CD4-positive, alpha-beta T cell (primary cell): ENCODE measurements at regions of chr15 and their contacts with region 1.

Region 1: GRCh38 chr15:41465822-41466421 is 27.8 kb upstream of the ITPKA start:
- DNase-seq: peak in 5 of 14 experiments; percentile 6 to 67 (median 58)
- ATAC-seq: peak; percentile 67
- H3K4me3 ChIP-seq: no peak overlapping the region
- H3K4me3 Mint-ChIP-seq: no peak overlapping the region
- H3K27ac ChIP-seq: no peak overlapping the region
- H3K27ac Mint-ChIP-seq: no peak overlapping the region
- H3K4me1 ChIP-seq: no peaks in the 10 kb centered on the region
- H3K4me1 Mint-ChIP-seq: peaks cover 4% of the 10 kb centered on the region
- H3K27me3 ChIP-seq: no peaks in the 10 kb centered on the region
- H3K27me3 Mint-ChIP-seq: no peaks in the 10 kb centered on the region
- CTCF ChIP-seq: peak; percentile 77

Region 2: DNA sequence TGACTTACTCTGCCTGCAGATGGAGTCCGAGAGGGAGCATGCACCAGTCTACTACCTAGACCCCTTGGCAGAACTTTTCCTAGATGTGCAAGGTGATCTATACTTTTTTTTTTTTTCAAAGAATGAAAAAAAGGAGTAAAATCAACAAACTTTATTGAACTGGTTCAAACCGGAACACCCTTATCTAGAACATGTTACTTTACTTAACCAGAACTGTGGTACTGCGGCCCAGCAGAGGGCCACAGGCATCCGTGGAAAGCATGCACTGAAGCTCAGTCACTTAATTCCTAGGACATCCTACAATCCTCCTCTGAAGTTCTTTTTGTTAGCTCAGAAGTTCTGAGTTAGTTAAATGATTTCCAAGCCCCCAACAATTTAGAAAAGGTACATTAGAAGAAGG is 491.0 kb before region 1 on chr15:
- CTCF ChIA-PET with region 1: no interaction called
- POLR2A ChIA-PET with region 1: no interaction called
- intact Hi-C with region 1: no loop called
- DNase-seq: no peak
- ATAC-seq: no peak
- H3K4me3 ChIP-seq: no peak overlapping the region
- H3K4me3 Mint-ChIP-seq: no peak overlapping the region
- H3K27ac ChIP-seq: no peak overlapping the region
- H3K27ac Mint-ChIP-seq: no peak overlapping the region
- H3K4me1 ChIP-seq: no peaks in the 10 kb centered on the region
- H3K4me1 Mint-ChIP-seq: no peaks in the 10 kb centered on the region
- H3K27me3 ChIP-seq: no peaks in the 10 kb centered on the region
- H3K27me3 Mint-ChIP-seq: no peaks in the 10 kb centered on the region
- CTCF ChIP-seq: no peak

Region 3: GRCh38 chr15:41506796-41507341 is 40.9 kb after region 1 on chr15:
- CTCF ChIA-PET with region 1: interaction called, 17 read pairs
- POLR2A ChIA-PET with region 1: no interaction called
- intact Hi-C with region 1: loop called in 1 of 2 experiments (anchors 5 kb)
- DNase-seq: peak in 2 of 14 experiments; percentile 24 to 49
- ATAC-seq: no peak
- H3K4me3 ChIP-seq: no peak overlapping the region
- H3K4me3 Mint-ChIP-seq: no peak overlapping the region
- H3K27ac ChIP-seq: no peak overlapping the region
- H3K27ac Mint-ChIP-seq: no peak overlapping the region
- H3K4me1 ChIP-seq: peaks cover 23% of the 10 kb centered on the region
- H3K4me1 Mint-ChIP-seq: peaks cover 8% of the 10 kb centered on the region
- H3K27me3 ChIP-seq: peaks cover 12 to 18% of the 10 kb centered on the region in 2 experiments
- H3K27me3 Mint-ChIP-seq: peaks cover 35% of the 10 kb centered on the region
- CTCF ChIP-seq: no peak

Region 4: DNA sequence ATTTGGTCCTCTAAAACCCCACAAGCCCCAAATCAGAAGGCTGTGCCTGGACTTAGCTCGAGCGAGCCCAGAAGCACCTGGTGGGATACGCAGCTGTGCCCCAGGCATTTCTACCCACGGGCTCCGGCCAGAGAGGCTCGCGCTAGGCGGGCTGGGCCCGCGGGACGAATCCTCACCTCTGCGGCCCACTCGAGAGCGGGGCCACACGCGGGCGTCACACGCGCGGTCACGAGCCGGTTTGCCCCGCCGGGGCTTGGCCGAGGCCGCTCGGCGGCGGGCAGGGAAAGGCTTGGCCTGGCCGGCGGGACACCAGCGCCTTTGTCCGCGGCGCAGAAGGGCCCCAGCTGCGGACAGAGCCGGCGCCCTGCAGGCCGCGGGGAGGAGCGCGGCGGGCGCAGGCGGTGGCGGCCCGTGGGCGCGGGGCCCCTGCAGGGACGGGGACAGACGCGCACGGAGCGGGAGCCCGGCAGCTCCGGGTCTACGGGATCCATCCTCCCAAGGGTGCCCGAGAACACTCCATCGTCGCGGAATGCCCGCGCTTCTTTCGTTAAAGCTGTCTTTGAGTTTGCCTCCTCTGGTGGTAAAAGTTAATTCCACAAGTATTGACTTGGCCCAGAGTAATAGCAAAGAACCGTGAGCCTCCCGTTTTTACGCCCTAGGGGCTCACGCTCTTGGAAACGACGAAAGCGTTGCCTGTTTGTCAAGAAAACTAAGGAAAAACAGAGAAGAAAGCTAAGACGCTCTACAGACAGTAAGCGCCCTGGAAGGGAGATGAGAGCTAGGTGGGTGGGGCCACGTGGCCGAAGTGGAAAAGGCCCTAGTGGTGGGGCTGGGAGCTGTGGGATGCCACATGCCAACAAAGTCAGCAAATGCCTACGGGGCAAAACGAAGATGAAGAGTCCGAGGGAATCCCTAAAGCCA is 119.5 kb after region 1 on chr15:
- CTCF ChIA-PET with region 1: interaction called, 6 read pairs
- POLR2A ChIA-PET with region 1: interaction called, 4 read pairs
- intact Hi-C with region 1: loop called (anchors 5 to 10 kb)
- DNase-seq: peak in 8 of 14 experiments; percentile 3 to 52 (median 20)
- ATAC-seq: peak; percentile 73
- H3K4me3 ChIP-seq: peak overlapping the region; percentile 34
- H3K4me3 Mint-ChIP-seq: peak overlapping the region; percentile 76
- H3K27ac ChIP-seq: no peak overlapping the region
- H3K27ac Mint-ChIP-seq: no peak overlapping the region
- H3K4me1 ChIP-seq: peaks cover 9% of the 10 kb centered on the region
- H3K4me1 Mint-ChIP-seq: peaks cover 10% of the 10 kb centered on the region
- H3K27me3 ChIP-seq: peaks cover 14 to 22% of the 10 kb centered on the region in 2 experiments
- H3K27me3 Mint-ChIP-seq: peaks cover 56% of the 10 kb centered on the region
- CTCF ChIP-seq: no peak

Region 5: DNA sequence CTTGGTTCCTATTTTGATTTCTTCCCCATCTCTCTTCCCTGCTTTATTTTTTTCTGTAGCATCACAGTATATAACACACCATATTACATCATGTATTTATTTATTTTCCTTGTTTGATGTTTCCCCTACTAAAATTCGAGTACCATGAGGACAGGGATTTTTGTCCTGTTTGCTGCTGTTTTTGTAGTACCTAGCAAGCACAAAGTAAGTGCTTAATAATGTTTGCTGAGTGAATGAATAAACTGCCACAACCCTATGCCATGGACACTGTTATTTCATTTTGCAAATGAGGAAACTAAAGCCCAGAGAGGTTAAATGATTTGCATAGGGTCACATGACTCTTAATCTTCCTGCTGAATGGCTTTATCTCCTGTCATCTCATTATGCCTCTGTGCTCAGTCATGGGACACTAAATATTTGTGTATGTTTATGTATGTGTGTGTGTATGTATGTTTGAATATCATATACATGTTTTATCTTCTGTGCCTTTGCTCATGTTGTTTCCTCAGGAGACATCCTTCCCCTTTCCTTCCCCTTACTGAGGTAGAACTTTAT is 168.2 kb after region 1 on chr15:
- CTCF ChIA-PET with region 1: no interaction called
- POLR2A ChIA-PET with region 1: no interaction called
- intact Hi-C with region 1: no loop called
- DNase-seq: peak in 2 of 14 experiments; percentile 11 to 12
- ATAC-seq: no peak
- H3K4me3 ChIP-seq: no peak overlapping the region
- H3K4me3 Mint-ChIP-seq: no peak overlapping the region
- H3K27ac ChIP-seq: no peak overlapping the region
- H3K27ac Mint-ChIP-seq: no peak overlapping the region
- H3K4me1 ChIP-seq: no peaks in the 10 kb centered on the region
- H3K4me1 Mint-ChIP-seq: peaks cover 5% of the 10 kb centered on the region
- H3K27me3 ChIP-seq: no peaks in the 10 kb centered on the region
- H3K27me3 Mint-ChIP-seq: no peaks in the 10 kb centered on the region
- CTCF ChIP-seq: no peak

Region 6: DNA sequence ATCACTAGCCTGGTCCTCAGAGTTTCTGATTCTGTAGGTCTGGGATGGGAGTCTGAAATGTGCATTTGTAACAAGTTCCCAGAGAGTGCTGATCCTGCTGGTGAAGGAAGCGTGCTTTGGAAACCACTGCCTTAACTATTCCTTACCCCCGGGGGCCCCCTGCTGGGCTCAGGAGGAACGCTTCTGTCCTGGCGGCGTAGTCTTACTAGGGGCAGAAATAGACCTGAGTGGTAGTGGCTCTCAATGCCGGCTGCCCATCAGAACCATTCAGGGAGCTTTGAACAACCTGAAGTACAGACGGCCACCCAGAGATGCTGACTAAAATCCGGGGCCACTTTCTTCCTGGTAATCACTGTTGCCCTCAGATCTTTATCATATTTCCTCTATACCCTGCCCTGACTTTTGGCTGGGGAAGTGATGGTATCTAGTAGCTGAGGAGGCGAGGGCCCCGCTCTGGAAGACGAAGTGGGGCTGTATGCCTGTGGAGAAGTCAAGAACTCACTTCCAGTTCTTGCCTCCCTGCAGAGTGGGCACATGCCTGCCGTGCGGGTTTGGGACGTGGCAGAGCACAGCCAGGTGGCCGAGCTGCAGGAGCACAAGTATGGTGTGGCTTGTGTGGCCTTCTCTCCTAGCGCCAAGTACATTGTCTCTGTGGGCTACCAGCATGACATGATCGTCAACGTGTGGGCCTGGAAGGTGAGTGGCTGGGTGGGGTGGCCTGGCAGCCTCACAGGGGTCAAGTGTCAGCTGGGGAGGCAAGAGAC is 345.7 kb after region 1 on chr15:
- CTCF ChIA-PET with region 1: interaction called, 4 read pairs
- POLR2A ChIA-PET with region 1: no interaction called
- intact Hi-C with region 1: loop called in 1 of 2 experiments (anchors 5 kb)
- DNase-seq: peak; percentile 62 to 88 (median 70)
- ATAC-seq: peak; percentile 97
- H3K4me3 ChIP-seq: no peak overlapping the region
- H3K4me3 Mint-ChIP-seq: no peak overlapping the region
- H3K27ac ChIP-seq: no peak overlapping the region
- H3K27ac Mint-ChIP-seq: peak overlapping the region; percentile 43
- H3K4me1 ChIP-seq: peaks cover 19% of the 10 kb centered on the region
- H3K4me1 Mint-ChIP-seq: peaks cover 12% of the 10 kb centered on the region
- H3K27me3 ChIP-seq: no peaks in the 10 kb centered on the region
- H3K27me3 Mint-ChIP-seq: no peaks in the 10 kb centered on the region
- CTCF ChIP-seq: peak; percentile 92

Region 7: DNA sequence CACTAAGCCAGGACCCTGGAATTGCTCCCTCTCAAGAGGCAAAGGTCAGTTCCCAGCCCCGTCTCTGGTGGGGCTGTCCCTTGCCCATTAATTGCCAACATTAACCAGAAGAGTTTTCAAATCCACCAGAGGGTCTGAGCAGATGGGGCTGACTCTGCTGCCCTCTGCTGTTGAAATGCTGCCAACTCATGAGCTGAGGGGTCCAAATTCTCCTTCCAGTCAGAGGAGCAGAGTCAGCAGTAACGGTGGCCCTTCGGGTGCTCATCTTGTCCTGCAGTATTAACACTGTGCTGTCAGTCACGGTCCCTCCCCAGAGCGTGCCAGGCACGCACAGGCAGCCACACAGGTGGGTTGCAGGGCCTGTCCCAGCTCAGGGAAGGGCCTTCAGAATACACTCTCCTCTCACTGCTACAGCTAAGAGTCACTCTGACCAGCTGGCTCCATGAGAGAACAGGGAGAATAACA is 438.7 kb after region 1 on chr15:
- CTCF ChIA-PET with region 1: no interaction called
- POLR2A ChIA-PET with region 1: no interaction called
- intact Hi-C with region 1: loop called in 1 of 2 experiments (anchors 5 kb)
- DNase-seq: peak; percentile 63 to 85 (median 71)
- ATAC-seq: peak; percentile 88
- H3K4me3 ChIP-seq: no peak overlapping the region
- H3K4me3 Mint-ChIP-seq: no peak overlapping the region
- H3K27ac ChIP-seq: no peak overlapping the region
- H3K27ac Mint-ChIP-seq: peak overlapping the region; percentile 80
- H3K4me1 ChIP-seq: peaks cover 10% of the 10 kb centered on the region
- H3K4me1 Mint-ChIP-seq: peaks cover 7% of the 10 kb centered on the region
- H3K27me3 ChIP-seq: no peaks in the 10 kb centered on the region
- H3K27me3 Mint-ChIP-seq: no peaks in the 10 kb centered on the region
- CTCF ChIP-seq: peak; percentile 95

Region 8: GRCh38 chr15:42306671-42307070 is 840.7 kb after region 1 on chr15:
- CTCF ChIA-PET with region 1: no interaction called
- POLR2A ChIA-PET with region 1: no interaction called
- intact Hi-C with region 1: no loop called
- DNase-seq: no peak
- ATAC-seq: no peak
- H3K4me3 ChIP-seq: no peak overlapping the region
- H3K4me3 Mint-ChIP-seq: no peak overlapping the region
- H3K27ac ChIP-seq: no peak overlapping the region
- H3K27ac Mint-ChIP-seq: no peak overlapping the region
- H3K4me1 ChIP-seq: no peaks in the 10 kb centered on the region
- H3K4me1 Mint-ChIP-seq: no peaks in the 10 kb centered on the region
- H3K27me3 ChIP-seq: no peaks in the 10 kb centered on the region
- H3K27me3 Mint-ChIP-seq: no peaks in the 10 kb centered on the region
- CTCF ChIP-seq: no peak